Mammary epithelial cell (primary cell): ENCODE measurements at regions of chr17 and their contacts with region 1.

Region 1: DNA sequence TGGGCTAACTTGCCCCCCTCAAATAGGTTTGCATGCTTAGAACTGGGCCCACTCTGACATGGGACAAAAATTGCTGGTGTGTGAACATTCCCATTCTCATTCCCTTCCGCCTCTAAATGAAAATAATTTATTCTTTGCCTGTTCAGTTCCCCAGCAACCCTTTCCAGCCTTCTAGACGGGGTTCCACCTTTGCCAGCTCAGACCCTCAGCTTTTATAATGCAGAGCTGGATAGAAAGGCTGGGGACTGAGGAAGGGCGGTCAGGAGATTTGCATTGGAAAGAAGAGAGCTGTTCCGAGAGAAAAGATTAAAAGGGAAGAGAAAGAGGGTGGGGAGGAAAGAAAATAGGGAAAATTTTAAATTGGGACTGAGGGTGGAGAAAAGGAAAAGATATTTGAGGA is 151.1 kb upstream of the WSCD1 start:
- DNase-seq: no peak
- H3K4me3 ChIP-seq: no peak overlapping the region
- H3K27ac ChIP-seq: no peak overlapping the region
- H3K4me1 ChIP-seq: no peaks in the 10 kb centered on the region
- H3K27me3 ChIP-seq: no peaks in the 10 kb centered on the region
- CTCF ChIP-seq: no peak

Region 2: GRCh38 chr17:5715478-5715877 is 203.6 kb before region 1 on chr17:
- CTCF ChIA-PET with region 1: no interaction called
- dilution Hi-C with region 1: loop called (anchors 5 kb)
- in situ Hi-C with region 1: no loop called
- intact Hi-C with region 1: no loop called
- DNase-seq: no peak
- H3K4me3 ChIP-seq: no peak overlapping the region
- H3K27ac ChIP-seq: no peak overlapping the region
- H3K4me1 ChIP-seq: no peaks in the 10 kb centered on the region
- H3K27me3 ChIP-seq: peaks cover 11% of the 10 kb centered on the region
- CTCF ChIP-seq: no peak